ENCODE measurements at regions of chr12 and their contacts with region 1.

Region 1: DNA sequence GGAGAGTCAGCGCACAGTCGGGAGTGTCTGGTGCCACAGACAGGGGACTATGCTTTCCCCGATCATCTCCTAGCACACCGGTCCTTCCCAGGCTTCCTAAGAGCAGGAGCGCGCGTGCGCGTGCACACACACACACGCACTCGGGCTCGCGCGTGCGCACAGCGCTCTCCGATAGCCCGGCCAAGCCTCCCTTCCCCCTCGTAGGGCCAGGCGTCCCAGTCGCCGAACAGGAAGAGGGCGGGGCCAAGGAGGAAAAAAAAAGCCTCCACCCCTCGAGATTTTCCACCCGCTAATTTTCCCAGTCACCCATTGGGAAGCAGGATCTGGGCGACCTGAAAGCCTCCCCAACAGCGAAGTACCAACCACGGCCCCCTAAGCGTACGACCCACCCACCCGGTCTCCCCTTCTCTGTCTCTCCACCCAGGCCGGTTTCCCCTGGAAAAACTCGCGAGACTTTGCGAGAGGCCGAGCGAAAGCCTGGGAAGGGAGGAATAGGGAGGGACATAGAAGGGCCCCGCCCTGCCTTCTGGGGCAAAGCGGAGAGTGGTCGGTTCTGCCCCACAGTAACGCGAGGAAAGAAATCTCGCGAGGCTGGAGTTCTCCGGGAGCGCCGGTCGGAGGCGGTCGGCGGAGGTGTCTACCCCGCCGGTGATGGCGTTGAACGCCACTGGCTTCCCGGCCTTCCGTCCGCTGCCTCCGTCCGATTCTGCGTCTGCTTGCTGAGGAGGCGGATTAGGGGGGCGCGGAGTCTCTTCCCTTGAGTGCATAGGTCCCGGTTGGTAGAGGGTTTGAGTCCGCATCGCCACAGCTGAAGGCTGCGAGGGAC is at the starts of genes FGFR1OP2 and INTS13:
- DNase-seq: peak; percentile 94 to 100 (median 96)

Region 2: GRCh38 chr12:26884765-26885576 is 53.1 kb before region 1 on chr12:
- intact Hi-C with region 1: loop called (anchors 5 kb)
- DNase-seq: peak; percentile 52 to 95 (median 84)

Region 3: GRCh38 chr12:27014085-27014858 is 76.2 kb after region 1 on chr12 and contains the start of gene TM7SF3:
- intact Hi-C with region 1: loop called (anchors 2 kb)
- DNase-seq: peak; percentile 77 to 98 (median 90)

Measured in posterior cingulate gyrus (tissue), 11 donors.